ENCODE measurements at regions of chr6 and their contacts with region 1.

Region 1: GRCh38 chr6:127690092-127690491 is 113.1 kb downstream of the C6orf58 start:
- DNase-seq: no peak
- ATAC-seq: no peak
- H3K4me3 ChIP-seq: no peak overlapping the region
- H3K27ac ChIP-seq: no peak overlapping the region
- H3K4me1 ChIP-seq: no peaks in the 10 kb centered on the region
- H3K27me3 ChIP-seq: no peaks in the 10 kb centered on the region
- CTCF ChIP-seq: peak; percentile 50
- EP300 ChIP-seq: no peak
- POLR2A ChIP-seq: no peak
- RAD21 ChIP-seq: no peak

Region 2: GRCh38 chr6:127554435-127555006 is 135.6 kb before region 1 on chr6:
- CTCF ChIA-PET with region 1: no interaction called
- POLR2A ChIA-PET with region 1: no interaction called
- in situ Hi-C with region 1: no loop called
- intact Hi-C with region 1: loop called (anchors 2 kb)
- DNase-seq: peak; percentile 46
- ATAC-seq: peak; percentile 96
- H3K4me3 ChIP-seq: no peak overlapping the region
- H3K27ac ChIP-seq: no peak overlapping the region
- H3K4me1 ChIP-seq: no peaks in the 10 kb centered on the region
- H3K27me3 ChIP-seq: no peaks in the 10 kb centered on the region
- CTCF ChIP-seq: peak; percentile 73
- EP300 ChIP-seq: no peak
- POLR2A ChIP-seq: no peak
- RAD21 ChIP-seq: peak; percentile 36; the same call in 1 of the 2 replicates